ENCODE measurements at regions of chr1 and their contacts with region 1.

Region 1: GRCh38 chr1:77978969-77979876 is at the start of gene FUBP1:
- DNase-seq: peak; percentile 92 to 95
- ATAC-seq: peak; percentile 90 to 93 (median 92)
- H3K4me3 ChIP-seq: peak within 1 kb of the TSS; percentile 83
- H3K27ac ChIP-seq: peak within 1 kb of the TSS; percentile 96
- H3K4me1 ChIP-seq: peaks cover 47% of the 10 kb centered on the region
- H3K27me3 ChIP-seq: no peaks in the 10 kb centered on the region
- CTCF ChIP-seq: peak; percentile 76
- total RNA-seq, gene FUBP1: 48.8 to 72.1 (median 63.7) TPM

Region 2: GRCh38 chr1:77961392-77961791 is 17.8 kb before region 1 on chr1:
- intact Hi-C with region 1: no loop called
- DNase-seq: no peak
- ATAC-seq: no peak
- H3K4me3 ChIP-seq: no peak overlapping the region
- H3K27ac ChIP-seq: no peak overlapping the region
- H3K4me1 ChIP-seq: no peaks in the 10 kb centered on the region
- H3K27me3 ChIP-seq: no peaks in the 10 kb centered on the region
- CTCF ChIP-seq: no peak

Region 3: GRCh38 chr1:78045926-78046778 is 66.9 kb after region 1 on chr1 and contains the start of gene GIPC2:
- intact Hi-C with region 1: loop called in 1 of 2 experiments (anchors 2 kb)
- DNase-seq: peak; percentile 49 to 73
- ATAC-seq: peak; percentile 78 to 86 (median 82)
- H3K4me3 ChIP-seq: peak within 1 kb of the TSS; percentile 79
- H3K27ac ChIP-seq: peak within 1 kb of the TSS; percentile 77
- H3K4me1 ChIP-seq: peaks cover 22% of the 10 kb centered on the region
- H3K27me3 ChIP-seq: no peaks in the 10 kb centered on the region
- CTCF ChIP-seq: no peak
- total RNA-seq, gene GIPC2: 1.2 to 1.6 (median 1.4) TPM

Measured in psoas muscle (tissue), 8 donors.